ENCODE measurements at regions of chr18 and their contacts with region 1.

Region 1: GRCh38 chr18:21740724-21741510 is at the start of gene MIB1:
- DNase-seq: peak; percentile 22 to 100 (median 98)
- ATAC-seq: peak; percentile 56
- H3K4me3 ChIP-seq: peak within 1 kb of the TSS; percentile 71 to 93
- H3K4me3 Mint-ChIP-seq: peak within 1 kb of the TSS; percentile 97
- H3K27ac ChIP-seq: peak within 1 kb of the TSS; percentile 75 to 78
- H3K27ac Mint-ChIP-seq: peak within 1 kb of the TSS; percentile 96
- H3K4me1 ChIP-seq: peaks cover 20% of the 10 kb centered on the region
- H3K4me1 Mint-ChIP-seq: peaks cover 36% of the 10 kb centered on the region
- H3K27me3 ChIP-seq: no peaks in the 10 kb centered on the region
- H3K27me3 Mint-ChIP-seq: no peaks in the 10 kb centered on the region
- CTCF ChIP-seq: no peak
- total RNA-seq, gene MIB1: 8.7 to 8.9 TPM

Region 2: GRCh38 chr18:21163647-21164547 is 577.0 kb before region 1 on chr18:
- CTCF ChIA-PET with region 1: no interaction called
- POLR2A ChIA-PET with region 1: no interaction called
- intact Hi-C with region 1: no loop called
- DNase-seq: peak in 1 of 9 experiments; percentile 22
- ATAC-seq: no peak
- H3K4me3 ChIP-seq: no peak overlapping the region
- H3K4me3 Mint-ChIP-seq: no peak overlapping the region
- H3K27ac ChIP-seq: no peak overlapping the region
- H3K27ac Mint-ChIP-seq: no peak overlapping the region
- H3K4me1 ChIP-seq: no peaks in the 10 kb centered on the region
- H3K4me1 Mint-ChIP-seq: no peaks in the 10 kb centered on the region
- H3K27me3 ChIP-seq: no peaks in the 10 kb centered on the region
- H3K27me3 Mint-ChIP-seq: peaks cover 4% of the 10 kb centered on the region
- CTCF ChIP-seq: no peak

Region 3: DNA sequence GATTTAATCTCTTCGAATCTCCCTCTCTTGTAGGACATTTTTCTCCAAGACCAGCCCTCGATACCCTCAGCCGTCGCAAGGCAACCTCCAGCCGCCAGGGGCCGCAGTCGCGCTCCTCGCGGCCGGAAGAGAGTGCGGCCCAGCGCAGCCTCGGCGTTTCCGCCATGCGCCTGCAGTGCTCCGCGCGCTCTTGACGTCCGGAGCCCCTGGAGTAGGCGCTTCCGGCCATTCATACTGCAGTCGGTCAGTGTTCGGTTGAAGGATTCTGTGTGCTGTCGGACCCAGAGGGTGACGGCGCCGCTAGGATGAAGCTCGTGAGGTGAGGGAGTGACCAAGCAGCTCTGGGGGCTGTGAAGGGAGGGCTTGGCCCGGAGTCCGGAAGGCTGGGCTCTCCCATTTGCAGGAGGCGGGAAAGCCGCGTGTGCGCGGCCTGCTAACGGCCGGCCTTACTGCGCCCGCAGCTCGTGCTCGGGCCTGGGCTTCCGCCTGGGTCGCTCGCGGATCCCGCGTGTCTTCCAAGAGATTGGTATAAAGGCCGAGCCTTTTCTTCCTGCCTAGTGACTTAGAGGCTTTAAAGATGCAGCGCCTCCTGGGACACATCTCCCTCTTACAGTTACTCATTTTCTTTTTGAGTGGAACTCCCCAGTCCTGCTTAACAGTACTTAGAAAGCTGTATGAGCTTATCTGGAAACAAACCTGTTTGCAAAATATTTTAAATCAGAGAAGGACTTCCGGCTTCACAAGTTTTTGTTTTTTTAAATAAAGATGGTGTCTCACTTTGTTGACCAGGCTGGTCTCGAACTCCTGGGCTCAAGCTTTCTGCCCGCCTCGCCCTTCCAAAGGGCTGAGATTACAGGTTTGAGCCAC is 128.6 kb before region 1 on chr18 and contains the start of gene SNRPD1:
- CTCF ChIA-PET with region 1: interaction called, 3 read pairs
- POLR2A ChIA-PET with region 1: interaction called, 17 read pairs
- intact Hi-C with region 1: loop called in 1 of 2 experiments (anchors 1 kb)
- DNase-seq: peak; percentile 78 to 94 (median 86)
- ATAC-seq: peak; percentile 98
- H3K4me3 ChIP-seq: peak within 1 kb of the TSS; percentile 83 to 94
- H3K4me3 Mint-ChIP-seq: peak within 1 kb of the TSS; percentile 98
- H3K27ac ChIP-seq: peak within 1 kb of the TSS; percentile 84 to 87
- H3K27ac Mint-ChIP-seq: peak within 1 kb of the TSS; percentile 98
- H3K4me1 ChIP-seq: peaks cover 29% of the 10 kb centered on the region
- H3K4me1 Mint-ChIP-seq: peaks cover 44% of the 10 kb centered on the region
- H3K27me3 ChIP-seq: no peaks in the 10 kb centered on the region
- H3K27me3 Mint-ChIP-seq: no peaks in the 10 kb centered on the region
- CTCF ChIP-seq: peak; percentile 94
- total RNA-seq, gene SNRPD1: 34.5 to 41.1 TPM

Region 4: GRCh38 chr18:21682371-21683051 is 58.4 kb before region 1 on chr18:
- CTCF ChIA-PET with region 1: no interaction called
- POLR2A ChIA-PET with region 1: no interaction called
- intact Hi-C with region 1: loop called in 1 of 2 experiments (anchors 2 kb)
- DNase-seq: peak in 6 of 9 experiments; percentile 5 to 78 (median 46)
- ATAC-seq: peak; percentile 91
- H3K4me3 ChIP-seq: peak overlapping the region; percentile 56 to 58
- H3K4me3 Mint-ChIP-seq: no peak overlapping the region
- H3K27ac ChIP-seq: peak overlapping the region; percentile 75 to 90
- H3K27ac Mint-ChIP-seq: no peak overlapping the region
- H3K4me1 ChIP-seq: no peaks in the 10 kb centered on the region
- H3K4me1 Mint-ChIP-seq: peaks cover 24% of the 10 kb centered on the region
- H3K27me3 ChIP-seq: no peaks in the 10 kb centered on the region
- H3K27me3 Mint-ChIP-seq: no peaks in the 10 kb centered on the region
- CTCF ChIP-seq: no peak

Region 5: DNA sequence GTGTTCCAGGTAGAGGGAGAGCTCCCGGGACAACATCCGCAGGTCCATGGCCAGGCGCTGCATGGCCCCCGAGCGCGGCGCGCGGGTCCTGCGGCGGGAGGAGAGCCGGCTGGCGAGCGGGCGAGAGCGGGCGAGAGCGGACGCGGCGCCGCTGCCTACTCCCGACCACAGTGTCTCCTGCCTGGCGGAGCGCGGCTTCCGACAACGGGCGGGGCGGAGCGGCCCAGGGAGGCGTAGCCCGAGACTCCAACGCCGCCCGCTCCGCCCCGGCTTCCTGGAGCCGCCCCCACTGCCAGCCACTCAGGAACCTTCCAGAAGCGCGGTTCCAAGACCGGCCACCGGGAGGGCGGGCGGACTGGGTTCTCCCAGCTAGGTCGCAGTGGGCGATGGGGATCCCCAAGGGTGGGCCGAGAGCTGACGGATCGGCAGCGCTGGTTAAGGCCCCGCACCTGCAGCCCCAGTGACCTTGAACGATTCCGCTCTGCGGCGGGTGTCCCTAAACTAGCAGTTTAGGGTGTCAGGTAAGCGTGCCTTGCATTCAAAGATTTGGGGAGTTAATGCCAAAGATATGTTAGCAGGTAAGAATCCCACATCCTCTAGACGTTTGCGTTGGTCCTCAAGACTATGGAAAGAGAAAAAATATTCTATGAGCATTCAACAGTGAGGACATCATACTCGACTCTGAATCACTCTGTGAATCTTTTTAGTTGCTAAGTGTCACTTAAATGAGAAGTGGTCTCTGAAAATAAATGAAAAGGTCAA is 36.1 kb before region 1 on chr18 and contains the start of gene ABHD3:
- CTCF ChIA-PET with region 1: interaction called, 4 read pairs
- POLR2A ChIA-PET with region 1: interaction called, 29 read pairs
- intact Hi-C with region 1: loop called (anchors 1 kb)
- DNase-seq: peak; percentile 83 to 96 (median 91)
- ATAC-seq: peak; percentile 92
- H3K4me3 ChIP-seq: peak within 1 kb of the TSS; percentile 81 to 99
- H3K4me3 Mint-ChIP-seq: peak within 1 kb of the TSS; percentile 96
- H3K27ac ChIP-seq: peak within 1 kb of the TSS; percentile 66 to 82
- H3K27ac Mint-ChIP-seq: peak within 1 kb of the TSS; percentile 94
- H3K4me1 ChIP-seq: peaks cover 25% of the 10 kb centered on the region
- H3K4me1 Mint-ChIP-seq: peaks cover 39% of the 10 kb centered on the region
- H3K27me3 ChIP-seq: no peaks in the 10 kb centered on the region
- H3K27me3 Mint-ChIP-seq: no peaks in the 10 kb centered on the region
- CTCF ChIP-seq: peak; percentile 41
- total RNA-seq, gene ABHD3: 28.9 to 34.3 TPM

Region 6: DNA sequence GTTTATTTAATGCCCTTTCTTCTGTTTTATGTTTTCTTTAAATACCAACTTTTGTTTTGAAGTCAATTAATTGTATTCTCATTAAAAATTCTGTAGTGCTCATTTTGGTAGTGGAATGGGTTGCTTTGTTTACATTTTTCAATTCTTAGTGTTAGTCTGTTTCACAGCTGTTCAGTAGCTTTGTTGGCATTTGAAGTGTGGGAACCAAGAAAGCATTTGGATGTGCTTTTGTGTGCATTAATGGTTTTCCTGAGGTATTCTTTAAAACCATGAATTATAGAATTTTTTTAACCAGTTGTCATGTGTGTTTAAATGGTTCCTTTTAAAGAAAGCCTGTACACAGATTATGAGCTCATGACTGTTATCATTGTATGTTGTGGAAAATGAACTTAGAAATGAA is 19.4 kb after region 1 on chr18:
- CTCF ChIA-PET with region 1: no interaction called
- POLR2A ChIA-PET with region 1: no interaction called
- intact Hi-C with region 1: no loop called
- DNase-seq: no peak
- ATAC-seq: no peak
- H3K4me3 ChIP-seq: no peak overlapping the region
- H3K4me3 Mint-ChIP-seq: no peak overlapping the region
- H3K27ac ChIP-seq: no peak overlapping the region
- H3K27ac Mint-ChIP-seq: no peak overlapping the region
- H3K4me1 ChIP-seq: peaks cover 4% of the 10 kb centered on the region
- H3K4me1 Mint-ChIP-seq: peaks cover 21% of the 10 kb centered on the region
- H3K27me3 ChIP-seq: no peaks in the 10 kb centered on the region
- H3K27me3 Mint-ChIP-seq: no peaks in the 10 kb centered on the region
- CTCF ChIP-seq: no peak

Measured in CD8-positive, alpha-beta T cell (primary cell).